ENCODE measurements at regions of chr16 and their contacts with region 1.

Region 1: DNA sequence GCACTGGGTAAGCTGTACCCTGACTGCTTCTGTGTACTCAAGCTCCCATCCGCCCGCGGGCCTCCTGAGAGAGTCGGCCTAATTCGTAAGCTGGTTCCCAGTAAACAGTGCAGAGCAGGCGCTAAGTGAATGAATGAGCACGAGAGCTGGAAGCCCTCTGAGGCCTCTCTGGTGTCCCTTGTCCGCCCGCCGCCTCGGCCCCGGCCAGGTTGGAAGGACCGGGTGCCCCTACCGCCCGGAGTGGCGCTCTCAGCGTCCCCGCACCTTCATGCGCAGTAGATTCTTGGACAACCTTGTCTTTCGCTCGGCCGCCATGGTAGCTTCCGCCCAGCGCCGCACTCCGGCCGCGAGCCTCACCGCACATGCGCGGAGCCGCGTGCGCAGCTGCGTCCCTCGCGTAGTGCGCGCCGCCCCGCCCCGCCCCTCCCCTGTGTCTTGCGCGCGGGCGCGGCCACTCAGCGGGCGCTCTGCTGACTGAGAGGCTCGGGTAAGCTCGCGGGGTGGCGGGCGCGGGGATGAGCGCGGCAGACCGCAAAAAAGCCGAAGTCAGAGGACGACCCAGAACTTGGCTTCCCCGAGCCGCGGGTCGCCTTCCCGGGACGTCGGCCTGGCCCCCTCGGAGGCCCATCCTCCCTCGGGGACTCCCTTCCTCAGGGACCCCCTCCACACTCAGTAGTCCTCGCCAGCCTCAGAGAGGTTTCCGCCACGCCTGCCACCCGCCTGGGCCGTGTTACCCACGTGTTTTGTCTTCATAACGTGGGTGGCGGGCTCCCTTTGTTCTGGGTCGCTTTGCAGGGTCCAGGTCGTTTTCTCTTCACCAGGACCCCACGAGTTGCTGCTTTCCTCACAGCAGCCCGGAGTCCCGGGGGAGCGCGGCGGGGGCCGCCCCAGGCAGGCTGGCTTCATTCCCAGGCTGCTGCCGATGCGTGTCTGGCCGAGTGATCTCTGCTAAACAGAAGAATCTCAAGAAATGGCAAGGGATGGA is at the start of gene MPHOSPH6:
- DNase-seq: peak; percentile 92

Region 2: GRCh38 chr16:81558444-81559175 is 611.5 kb before region 1 on chr16:
- CTCF ChIA-PET with region 1: no interaction called
- POLR2A ChIA-PET with region 1: no interaction called
- DNase-seq: no peak

Region 3: GRCh38 chr16:82152196-82153112 is 17.7 kb before region 1 on chr16:
- CTCF ChIA-PET with region 1: no interaction called
- POLR2A ChIA-PET with region 1: interaction called, 12 read pairs
- DNase-seq: peak; percentile 39

Region 4: GRCh38 chr16:82181456-82182185 is 11.5 kb after region 1 on chr16:
- CTCF ChIA-PET with region 1: no interaction called
- POLR2A ChIA-PET with region 1: interaction called, 21 read pairs
- DNase-seq: no peak